ENCODE measurements at regions of chr11 and their contacts with region 1.

Region 1: DNA sequence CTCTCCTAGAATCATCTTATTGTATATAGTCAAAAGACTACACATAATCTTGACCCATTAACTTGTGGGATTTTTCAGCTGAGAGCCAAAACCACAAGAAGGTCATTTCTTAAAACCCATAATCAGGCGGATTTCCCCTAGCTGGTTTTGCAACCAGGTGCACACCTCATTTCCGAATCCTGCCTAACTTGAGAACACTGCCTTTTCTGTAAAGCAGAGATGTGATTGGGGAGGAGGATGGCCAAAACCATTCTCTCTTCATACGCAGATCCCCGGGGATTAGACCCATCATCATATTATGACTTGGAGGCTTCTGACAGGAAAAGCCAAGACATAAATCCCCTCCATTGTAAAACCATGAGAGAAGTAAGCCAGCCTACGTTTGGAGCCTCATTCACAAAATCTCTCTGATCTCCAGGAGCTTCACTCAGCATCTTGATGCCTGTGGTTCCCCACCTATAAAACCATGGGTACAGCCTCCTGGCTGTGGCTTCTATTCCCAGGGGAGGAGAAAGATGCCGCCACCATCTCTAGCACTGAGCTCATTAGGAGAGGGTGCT is 191.3 kb downstream of the KIF18A start:
- DNase-seq: peak; percentile 89
- ATAC-seq: peak; percentile 92
- H3K4me3 ChIP-seq: no peak overlapping the region
- H3K27ac ChIP-seq: peak overlapping the region; percentile 22
- H3K4me1 ChIP-seq: peaks cover 9% of the 10 kb centered on the region; the same call in 1 of the 2 replicates
- H3K27me3 ChIP-seq: no peaks in the 10 kb centered on the region
- CTCF ChIP-seq: no peak
- EP300 ChIP-seq: peak; percentile 78 to 87; a peak in 3 of 4 replicates
- POLR2A ChIP-seq: no peak
- RAD21 ChIP-seq: no peak

Region 2: GRCh38 chr11:27839226-27839870 is 77.3 kb before region 1 on chr11:
- CTCF ChIA-PET with region 1: interaction called, 3 read pairs
- POLR2A ChIA-PET with region 1: interaction called, 4 read pairs
- RAD21 ChIA-PET with region 1: interaction called, 15 read pairs
- SMC1A ChIA-PET with region 1: interaction called, 16 read pairs
- in situ Hi-C with region 1: no loop called
- intact Hi-C with region 1: loop called (anchors 5 kb)
- DNase-seq: no peak
- ATAC-seq: peak; percentile 58
- H3K4me3 ChIP-seq: no peak overlapping the region
- H3K27ac ChIP-seq: no peak overlapping the region
- H3K4me1 ChIP-seq: no peaks in the 10 kb centered on the region
- H3K27me3 ChIP-seq: no peaks in the 10 kb centered on the region
- CTCF ChIP-seq: peak in 2 of 3 experiments; percentile 19 to 34; a peak in 3 of 6 replicates
- EP300 ChIP-seq: no peak
- POLR2A ChIP-seq: no peak
- RAD21 ChIP-seq: no peak

Region 3: GRCh38 chr11:27882066-27882697 is 34.4 kb before region 1 on chr11:
- CTCF ChIA-PET with region 1: no interaction called
- POLR2A ChIA-PET with region 1: no interaction called
- RAD21 ChIA-PET with region 1: no interaction called
- SMC1A ChIA-PET with region 1: interaction called, 3 read pairs
- in situ Hi-C with region 1: no loop called
- intact Hi-C with region 1: loop called (anchors 1 kb)
- DNase-seq: no peak
- ATAC-seq: peak; percentile 86
- H3K4me3 ChIP-seq: no peak overlapping the region
- H3K27ac ChIP-seq: peak overlapping the region; percentile 11; the same call in 1 of the 2 replicates
- H3K4me1 ChIP-seq: peaks cover 9% of the 10 kb centered on the region
- H3K27me3 ChIP-seq: no peaks in the 10 kb centered on the region
- CTCF ChIP-seq: no peak
- EP300 ChIP-seq: no peak
- POLR2A ChIP-seq: no peak
- RAD21 ChIP-seq: no peak

Region 4: GRCh38 chr11:27902981-27903624 is 13.5 kb before region 1 on chr11:
- CTCF ChIA-PET with region 1: interaction called, 3 read pairs
- POLR2A ChIA-PET with region 1: no interaction called
- RAD21 ChIA-PET with region 1: interaction called, 10 read pairs
- SMC1A ChIA-PET with region 1: interaction called, 12 read pairs
- in situ Hi-C with region 1: no loop called
- intact Hi-C with region 1: no loop called
- DNase-seq: no peak
- ATAC-seq: no peak
- H3K4me3 ChIP-seq: no peak overlapping the region
- H3K27ac ChIP-seq: no peak overlapping the region
- H3K4me1 ChIP-seq: no peaks in the 10 kb centered on the region
- H3K27me3 ChIP-seq: no peaks in the 10 kb centered on the region; a peak in 1 of 4 replicates
- CTCF ChIP-seq: no peak
- EP300 ChIP-seq: no peak
- POLR2A ChIP-seq: no peak
- RAD21 ChIP-seq: no peak

Region 5: DNA sequence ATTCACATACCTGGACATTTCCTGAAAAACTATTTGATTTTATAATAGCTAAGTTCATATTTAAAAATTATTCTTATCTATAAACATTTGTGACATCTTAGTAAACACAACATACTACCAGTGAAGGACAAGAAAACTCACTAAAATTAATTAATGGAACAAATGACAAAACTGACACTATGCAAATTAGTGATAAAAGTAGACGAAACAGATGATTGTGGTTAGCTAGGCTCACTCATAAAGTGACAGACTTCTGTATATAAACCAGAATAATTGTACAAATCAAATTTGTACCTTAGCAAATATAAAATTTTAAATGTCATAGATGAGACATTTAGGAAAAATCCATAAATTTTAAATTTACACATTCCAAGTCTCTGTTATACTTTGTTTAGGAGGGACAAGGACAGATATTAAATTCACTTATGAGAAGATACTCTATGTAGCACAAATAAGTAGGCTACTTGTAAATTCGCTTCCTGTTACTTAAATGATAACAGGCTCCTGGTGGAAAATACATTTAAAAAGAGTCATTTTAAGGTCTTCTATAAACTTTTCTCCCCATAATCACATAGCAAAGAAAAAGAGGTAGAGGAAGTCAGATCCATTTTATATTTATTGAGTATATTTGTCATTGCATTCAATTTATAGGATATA is 110.1 kb after region 1 on chr11:
- CTCF ChIA-PET with region 1: no interaction called
- POLR2A ChIA-PET with region 1: no interaction called
- RAD21 ChIA-PET with region 1: no interaction called
- SMC1A ChIA-PET with region 1: no interaction called
- in situ Hi-C with region 1: no loop called
- intact Hi-C with region 1: no loop called
- DNase-seq: no peak
- ATAC-seq: peak; percentile 76
- H3K4me3 ChIP-seq: no peak overlapping the region
- H3K27ac ChIP-seq: no peak overlapping the region
- H3K4me1 ChIP-seq: no peaks in the 10 kb centered on the region
- H3K27me3 ChIP-seq: no peaks in the 10 kb centered on the region
- CTCF ChIP-seq: no peak
- EP300 ChIP-seq: no peak
- POLR2A ChIP-seq: no peak
- RAD21 ChIP-seq: no peak

Region 6: GRCh38 chr11:28107748-28108618 is 191.4 kb after region 1 on chr11 and contains the starts of genes KIF18A and METTL15:
- CTCF ChIA-PET with region 1: no interaction called
- POLR2A ChIA-PET with region 1: interaction called, 3 read pairs
- RAD21 ChIA-PET with region 1: interaction called, 10 read pairs
- SMC1A ChIA-PET with region 1: interaction called, 3 read pairs
- in situ Hi-C with region 1: no loop called
- intact Hi-C with region 1: loop called (anchors 5 kb)
- DNase-seq: peak; percentile 96
- ATAC-seq: peak; percentile 91
- H3K4me3 ChIP-seq: peak within 1 kb of the TSS; percentile 86
- H3K27ac ChIP-seq: peak within 1 kb of the TSS; percentile 84
- H3K4me1 ChIP-seq: peaks cover 6% of the 10 kb centered on the region
- H3K27me3 ChIP-seq: no peaks in the 10 kb centered on the region
- CTCF ChIP-seq: no peak
- EP300 ChIP-seq: peak in 1 of 2 experiments; percentile 5; a peak in 1 of 4 replicates
- POLR2A ChIP-seq: peak; percentile 92
- RAD21 ChIP-seq: no peak
- polyA plus RNA-seq, gene KIF18A: 11.5 to 14.9 TPM
- polyA plus RNA-seq, gene METTL15: 10.5 to 15.1 TPM

Measured in GM12878 (cell line).